OCI-LY7 (cell line): ENCODE measurements at regions of chr20 and their contacts with region 1.

Region 1: DNA sequence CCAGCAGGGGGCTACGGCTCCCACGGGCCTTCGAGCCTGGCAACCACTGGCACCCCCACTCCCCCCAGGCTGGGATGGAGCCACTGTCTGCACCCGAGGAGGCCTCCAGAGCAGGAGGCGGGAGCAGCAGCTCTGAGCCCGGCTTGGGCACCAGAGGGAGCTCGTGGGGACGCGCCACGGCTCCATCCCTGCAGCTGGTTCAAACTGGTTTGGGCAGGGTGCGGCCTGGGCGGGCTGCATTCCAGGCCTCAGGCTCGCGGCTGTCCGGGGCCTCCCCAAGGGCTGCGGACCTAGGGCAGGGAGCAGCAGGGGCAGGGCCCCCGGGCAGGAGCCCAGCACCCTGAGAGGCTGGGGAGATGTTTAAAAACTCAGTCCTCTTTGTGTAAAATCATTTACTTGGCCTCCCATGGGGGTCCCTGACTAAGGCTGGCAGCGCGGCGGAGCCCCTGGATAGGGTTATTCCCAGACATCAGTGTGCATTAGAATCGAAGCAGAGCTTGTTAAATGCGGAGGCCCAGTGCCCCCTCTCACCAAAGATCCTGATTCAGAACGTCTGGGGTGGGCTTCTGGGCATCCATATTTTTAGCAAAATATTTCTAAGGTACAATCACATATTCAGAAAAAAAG is 4.1 kb upstream of the BCAS4 start:
- DNase-seq: peak; percentile 91
- H3K4me3 ChIP-seq: no peak overlapping the region
- H3K27ac ChIP-seq: peak overlapping the region; percentile 46
- H3K4me1 ChIP-seq: peaks cover 42% of the 10 kb centered on the region
- CTCF ChIP-seq: peak; percentile 82

Region 2: DNA sequence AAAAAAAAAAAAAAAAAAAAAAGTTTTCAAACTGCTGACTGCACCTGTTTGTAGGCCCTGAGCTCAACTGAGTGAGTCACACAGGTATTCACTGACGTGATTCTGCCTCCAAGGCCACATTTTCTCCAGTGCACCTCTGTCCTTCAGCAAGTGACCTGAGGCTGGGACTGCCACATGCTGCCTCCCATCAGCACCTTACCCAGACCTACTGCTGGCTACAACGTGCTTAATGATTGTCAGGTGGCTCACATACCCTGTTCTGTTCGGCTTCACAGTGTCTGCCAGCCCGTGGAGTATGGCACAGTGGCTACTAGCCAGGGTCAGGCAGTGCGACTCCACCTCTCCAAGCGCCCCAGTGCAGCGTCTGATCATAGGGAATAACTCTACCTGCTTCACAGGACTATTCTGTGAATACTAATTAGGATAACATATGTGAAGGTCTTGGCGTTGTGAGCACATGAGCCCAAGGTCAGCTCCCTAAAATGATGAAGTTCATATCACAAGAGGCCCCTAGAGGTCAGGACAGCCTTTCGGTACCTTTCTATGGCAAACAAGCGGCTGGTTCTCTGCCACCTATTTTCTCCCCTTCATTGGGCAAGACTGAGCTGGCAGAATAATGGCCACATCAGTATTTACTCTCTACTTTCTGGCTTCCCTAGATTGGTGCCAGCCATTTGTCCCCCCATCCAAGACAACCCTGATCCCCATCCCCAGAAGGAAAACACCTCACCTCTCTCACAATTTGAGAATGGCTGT is 127.5 kb before region 1 on chr20:
- CTCF ChIA-PET with region 1: no interaction called
- POLR2A ChIA-PET with region 1: no interaction called
- intact Hi-C with region 1: loop called (anchors 10 kb)
- DNase-seq: peak; percentile 52
- H3K4me3 ChIP-seq: no peak overlapping the region
- H3K27ac ChIP-seq: no peak overlapping the region
- H3K4me1 ChIP-seq: peaks cover 16% of the 10 kb centered on the region
- CTCF ChIP-seq: peak; percentile 67

Region 3: DNA sequence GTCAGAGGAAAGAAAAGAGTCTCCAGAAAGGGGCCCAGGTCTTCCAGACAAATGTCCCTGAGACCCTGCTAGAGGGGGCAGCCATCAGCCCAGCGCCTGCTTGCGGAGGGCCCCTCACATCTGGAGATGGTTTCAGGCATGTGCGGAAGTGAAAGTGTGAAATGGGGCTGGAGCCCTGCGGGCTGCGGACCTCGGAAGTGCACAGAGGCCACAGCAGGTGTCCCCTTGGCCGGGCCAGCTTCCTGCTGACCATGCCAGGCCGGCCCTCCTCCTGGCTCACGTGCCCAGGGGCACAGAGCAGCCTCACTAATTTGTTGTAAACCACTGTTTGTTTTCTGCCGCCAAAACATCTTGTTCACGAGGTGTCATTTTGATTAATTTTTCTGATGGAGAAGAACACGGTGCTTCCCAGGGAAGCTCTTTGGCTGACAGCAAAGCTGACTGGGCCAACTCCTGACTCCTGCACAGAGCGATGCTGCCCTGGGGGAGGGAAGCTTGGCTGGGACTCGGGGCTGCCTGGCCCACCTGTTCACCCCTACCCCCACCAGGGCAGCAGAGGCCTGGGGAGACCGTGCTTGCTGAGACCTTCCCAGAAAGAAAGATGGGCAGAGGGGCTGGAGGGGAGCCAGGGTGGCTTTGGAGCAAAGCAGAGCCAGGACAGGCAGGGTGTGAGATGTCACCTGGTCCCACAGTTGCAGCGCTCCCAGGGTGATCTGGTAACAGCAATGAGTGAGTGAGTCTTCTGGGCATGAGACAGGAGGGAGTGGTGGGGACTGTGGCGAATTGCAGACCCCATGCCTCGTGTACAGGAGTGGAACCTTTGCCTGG is 58.3 kb after region 1 on chr20:
- CTCF ChIA-PET with region 1: no interaction called
- POLR2A ChIA-PET with region 1: interaction called, 5 read pairs
- intact Hi-C with region 1: loop called (anchors 2 kb)
- DNase-seq: peak; percentile 76
- H3K4me3 ChIP-seq: peak overlapping the region; percentile 7
- H3K27ac ChIP-seq: peak overlapping the region; percentile 77
- H3K4me1 ChIP-seq: peaks cover 59% of the 10 kb centered on the region
- CTCF ChIP-seq: no peak

Region 4: DNA sequence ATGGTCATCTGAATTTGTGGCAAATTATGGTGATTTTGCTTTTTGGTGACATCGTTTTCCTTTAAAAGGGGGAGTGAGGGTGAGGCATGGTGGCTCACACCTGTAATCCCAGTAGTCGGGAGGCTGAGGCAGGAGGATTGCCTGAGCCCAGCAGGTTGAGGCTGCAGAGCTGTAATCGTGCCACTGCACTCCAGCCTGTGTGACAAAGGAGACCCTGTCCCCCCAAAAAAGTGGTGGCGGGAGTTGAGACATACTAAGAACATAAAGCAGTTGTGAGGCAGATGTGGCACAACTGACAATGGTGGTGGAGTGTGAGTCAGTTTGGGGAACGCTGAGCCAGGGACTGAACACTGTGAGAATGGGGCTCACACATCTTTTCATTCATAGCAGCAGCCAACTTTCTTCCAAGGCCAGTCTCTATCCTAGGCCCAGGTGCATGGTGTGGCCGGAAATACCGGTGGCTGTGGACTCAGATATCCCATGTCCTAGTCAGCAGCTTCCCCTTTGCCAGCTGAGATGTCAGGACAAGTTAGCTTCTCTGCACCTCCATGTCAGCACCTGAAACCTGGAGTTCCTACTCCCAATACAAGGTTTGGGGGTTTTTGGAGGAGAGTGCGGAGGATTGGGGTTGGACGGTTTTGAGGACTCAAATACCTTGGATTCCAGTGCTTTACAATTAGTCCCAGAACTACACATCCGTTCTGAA is 95.2 kb after region 1 on chr20:
- CTCF ChIA-PET with region 1: interaction called, 3 read pairs
- POLR2A ChIA-PET with region 1: interaction called, 3 read pairs
- intact Hi-C with region 1: loop called (anchors 2 kb)
- DNase-seq: no peak
- H3K4me3 ChIP-seq: no peak overlapping the region
- H3K27ac ChIP-seq: no peak overlapping the region
- H3K4me1 ChIP-seq: peaks cover 6% of the 10 kb centered on the region
- CTCF ChIP-seq: no peak

Region 5: DNA sequence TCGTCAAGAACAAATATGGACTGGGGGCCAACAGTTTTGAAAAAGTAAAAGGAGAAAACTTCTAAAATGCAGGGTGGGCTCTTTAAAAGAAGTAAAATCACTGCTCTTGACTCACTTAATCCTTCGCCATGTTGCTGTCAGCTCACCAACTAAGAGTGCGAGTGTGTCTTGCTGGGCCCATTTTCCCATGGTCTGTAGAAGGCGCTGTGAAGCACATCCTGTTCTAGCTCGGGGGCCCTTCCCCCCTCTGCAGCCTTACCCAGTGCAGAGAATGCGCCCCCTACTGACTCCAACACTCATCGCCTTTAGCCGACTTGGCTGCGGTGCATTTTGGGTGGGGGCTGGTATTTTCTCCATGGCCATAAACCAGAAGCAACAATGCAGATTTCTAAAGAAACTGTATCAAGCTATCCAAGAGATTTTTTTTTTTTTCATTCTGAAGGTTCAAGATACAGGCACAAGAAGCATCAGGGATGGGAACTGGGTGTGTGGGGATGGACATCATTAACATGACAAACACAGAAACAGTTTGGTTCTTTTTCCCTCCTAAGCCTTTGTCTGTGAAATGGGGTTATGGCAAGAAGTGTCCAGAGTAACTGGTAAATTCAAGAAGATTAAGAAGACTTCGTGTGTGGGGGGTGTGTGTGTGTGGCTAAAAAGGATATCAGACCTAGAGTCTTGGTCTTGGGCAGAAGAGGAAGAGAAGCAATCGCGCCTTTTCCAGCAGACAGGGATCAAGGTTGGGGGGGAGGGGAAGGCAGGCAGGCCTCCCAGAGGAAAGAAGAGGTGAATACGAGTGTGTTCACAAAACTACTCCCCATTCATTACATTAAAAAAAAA is 138.8 kb after region 1 on chr20:
- CTCF ChIA-PET with region 1: interaction called, 8 read pairs
- POLR2A ChIA-PET with region 1: interaction called, 6 read pairs
- intact Hi-C with region 1: loop called (anchors 1 kb)
- DNase-seq: peak; percentile 97
- H3K4me3 ChIP-seq: peak overlapping the region; percentile 93
- H3K27ac ChIP-seq: peak overlapping the region; percentile 89
- H3K4me1 ChIP-seq: peaks cover 59% of the 10 kb centered on the region
- CTCF ChIP-seq: peak; percentile 100

Region 6: GRCh38 chr20:51306503-51307358 is 516.0 kb after region 1 on chr20:
- CTCF ChIA-PET with region 1: no interaction called
- POLR2A ChIA-PET with region 1: no interaction called
- intact Hi-C with region 1: loop called (anchors 5 kb)
- DNase-seq: peak; percentile 74
- H3K4me3 ChIP-seq: no peak overlapping the region
- H3K27ac ChIP-seq: no peak overlapping the region
- H3K4me1 ChIP-seq: no peaks in the 10 kb centered on the region
- CTCF ChIP-seq: peak; percentile 87